Left ventricle myocardium inferior (tissue), 1 donor: ENCODE measurements at regions of chr15 and their contacts with region 1.

Region 1: DNA sequence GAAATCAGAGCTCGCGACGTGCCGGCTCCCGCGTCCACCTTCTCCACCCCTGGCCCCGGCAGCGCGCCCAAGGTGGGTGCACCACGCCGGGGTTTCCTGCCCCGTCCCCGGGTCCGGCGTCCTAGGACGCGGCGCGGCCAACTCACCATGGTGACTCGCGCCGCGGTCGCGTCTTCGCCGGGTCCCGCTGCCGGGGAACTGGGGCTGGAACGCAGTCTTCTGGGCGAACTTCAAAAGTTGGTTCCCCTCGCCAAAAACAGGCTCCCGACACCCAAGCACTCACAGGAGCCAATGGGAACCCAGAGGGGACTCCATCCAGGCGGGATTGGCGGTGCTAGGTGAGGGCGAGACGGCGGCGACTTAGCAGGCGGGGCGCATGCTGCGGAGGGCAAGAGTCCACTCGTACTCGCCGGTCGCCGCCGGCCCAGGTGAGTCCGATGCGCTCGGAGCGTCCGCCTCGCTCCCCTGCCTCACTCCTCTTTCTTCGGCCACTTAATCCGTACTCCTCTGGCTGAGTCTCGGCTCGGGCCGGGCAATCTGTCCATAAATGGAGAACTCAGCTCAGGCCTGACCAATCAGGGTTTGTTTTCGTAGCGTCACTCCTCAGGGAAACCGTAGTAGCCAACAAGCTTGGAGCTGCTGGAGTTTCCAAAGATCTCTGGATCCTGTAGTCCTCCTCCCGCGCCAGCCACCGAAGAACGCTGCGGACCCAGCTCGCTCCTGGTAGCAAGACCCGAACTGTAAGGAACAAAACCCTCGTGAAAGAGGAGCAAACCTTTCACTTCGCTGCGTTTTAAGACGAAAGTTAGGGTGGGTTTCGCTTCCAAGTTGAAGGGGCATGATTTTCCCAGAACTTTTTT is at the start of gene MYO1E:
- DNase-seq: peak; percentile 81
- H3K4me3 ChIP-seq: peak within 1 kb of the TSS; percentile 98
- H3K27ac ChIP-seq: peak within 1 kb of the TSS; percentile 97
- H3K4me1 ChIP-seq: peaks cover 38% of the 10 kb centered on the region
- H3K27me3 ChIP-seq: no peaks in the 10 kb centered on the region
- CTCF ChIP-seq: no peak
- total RNA-seq, gene MYO1E: 23.6 TPM

Region 2: GRCh38 chr15:59247364-59247763 is 125.2 kb before region 1 on chr15:
- intact Hi-C with region 1: loop called (anchors 10 kb)
- DNase-seq: no peak
- H3K4me3 ChIP-seq: no peak overlapping the region
- H3K27ac ChIP-seq: no peak overlapping the region
- H3K4me1 ChIP-seq: peaks cover 7% of the 10 kb centered on the region
- H3K27me3 ChIP-seq: no peaks in the 10 kb centered on the region
- CTCF ChIP-seq: peak; percentile 69

Region 3: GRCh38 chr15:59644756-59645155 is 272.2 kb after region 1 on chr15:
- intact Hi-C with region 1: no loop called
- DNase-seq: no peak
- H3K4me3 ChIP-seq: no peak overlapping the region
- H3K27ac ChIP-seq: no peak overlapping the region
- H3K4me1 ChIP-seq: peaks cover 8% of the 10 kb centered on the region
- H3K27me3 ChIP-seq: no peaks in the 10 kb centered on the region
- CTCF ChIP-seq: no peak